ENCODE measurements at regions of chr19 and their contacts with region 1.

Region 1: DNA sequence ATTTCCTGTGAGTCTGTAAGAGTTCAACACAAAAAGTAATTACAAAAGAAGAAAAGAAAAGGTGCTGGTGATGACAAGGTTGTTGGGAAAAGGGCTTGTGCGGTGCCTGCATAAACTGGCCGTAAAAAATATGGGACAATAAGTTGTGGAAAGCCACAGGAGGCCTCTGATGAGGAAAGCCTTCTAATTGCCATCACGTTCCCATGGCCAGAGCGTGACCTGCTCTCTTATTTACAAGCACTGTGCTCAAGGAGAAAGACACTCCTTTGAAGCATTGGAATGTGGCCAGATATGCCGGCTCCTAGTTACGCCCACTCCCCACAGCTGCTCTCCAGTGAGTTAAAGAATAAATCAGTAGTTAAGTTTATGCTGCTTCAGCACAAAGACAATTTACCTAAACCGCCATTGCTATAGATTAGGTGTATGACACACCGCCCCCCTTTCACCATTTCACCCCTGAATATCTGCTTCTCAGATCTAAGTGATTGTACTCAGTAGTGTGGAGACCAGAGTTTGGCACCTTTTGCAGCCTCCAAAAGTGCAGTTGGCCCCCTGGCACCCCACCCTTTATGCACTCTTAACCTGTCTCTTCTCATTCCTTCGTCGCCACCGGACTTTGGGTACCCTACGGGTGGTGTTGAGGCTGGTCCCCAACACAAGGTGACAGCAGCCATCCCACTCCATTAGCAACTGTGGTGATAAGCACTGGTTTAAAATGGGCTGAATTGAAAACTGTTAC is 8.1 kb upstream of the PGLYRP1 start:
- DNase-seq: no peak
- H3K4me3 ChIP-seq: no peak overlapping the region
- H3K27ac ChIP-seq: no peak overlapping the region
- H3K4me1 ChIP-seq: no peaks in the 10 kb centered on the region
- H3K27me3 ChIP-seq: no peaks in the 10 kb centered on the region
- CTCF ChIP-seq: no peak
- EP300 ChIP-seq: no peak
- POLR2A ChIP-seq: no peak
- RAD21 ChIP-seq: no peak

Region 2: GRCh38 chr19:45955905-45956608 is 74.9 kb before region 1 on chr19:
- CTCF ChIA-PET with region 1: no interaction called
- POLR2A ChIA-PET with region 1: no interaction called
- DNase-seq: no peak
- H3K4me3 ChIP-seq: no peak overlapping the region
- H3K27ac ChIP-seq: no peak overlapping the region
- H3K4me1 ChIP-seq: peaks cover 0 to 7% (median 2%) of the 10 kb centered on the region in 4 experiments; a peak in 5 of 7 replicates
- H3K27me3 ChIP-seq: no peaks in the 10 kb centered on the region
- CTCF ChIP-seq: no peak
- EP300 ChIP-seq: no peak
- POLR2A ChIP-seq: no peak
- RAD21 ChIP-seq: no peak

Region 3: GRCh38 chr19:45994989-45995714 is 35.8 kb before region 1 on chr19 and contains the start of gene CCDC61:
- CTCF ChIA-PET with region 1: no interaction called
- POLR2A ChIA-PET with region 1: no interaction called
- DNase-seq: peak; percentile 96 to 97
- H3K4me3 ChIP-seq: peak within 1 kb of the TSS; percentile 83 to 100 (median 89)
- H3K27ac ChIP-seq: peak within 1 kb of the TSS; percentile 57; the same call in 1 of the 2 replicates
- H3K4me1 ChIP-seq: peaks cover 3 to 7% (median 4%) of the 10 kb centered on the region in 4 experiments; a peak in 6 of 7 replicates
- H3K27me3 ChIP-seq: no peaks in the 10 kb centered on the region
- CTCF ChIP-seq: no peak
- EP300 ChIP-seq: no peak
- POLR2A ChIP-seq: peak; percentile 41 to 50; a peak in 2 of 3 replicates
- RAD21 ChIP-seq: no peak
- total RNA-seq, gene CCDC61: 16.1 and 17.4 TPM in 2 replicates

Region 4: GRCh38 chr19:46009530-46010510 is 21.2 kb before region 1 on chr19:
- CTCF ChIA-PET with region 1: interaction called, 15 read pairs
- POLR2A ChIA-PET with region 1: interaction called, 4 read pairs
- DNase-seq: peak in 1 of 2 experiments; percentile 95
- H3K4me3 ChIP-seq: no peak overlapping the region
- H3K27ac ChIP-seq: no peak overlapping the region
- H3K4me1 ChIP-seq: peaks cover 0 to 6% (median 5%) of the 10 kb centered on the region in 4 experiments; a peak in 5 of 7 replicates
- H3K27me3 ChIP-seq: peaks cover 0 to 7% (median 6%) of the 10 kb centered on the region in 4 experiments; a peak in 4 of 7 replicates
- CTCF ChIP-seq: peak; percentile 75 to 84 (median 82)
- EP300 ChIP-seq: no peak
- POLR2A ChIP-seq: no peak
- RAD21 ChIP-seq: peak; percentile 61 to 72

Region 5: DNA sequence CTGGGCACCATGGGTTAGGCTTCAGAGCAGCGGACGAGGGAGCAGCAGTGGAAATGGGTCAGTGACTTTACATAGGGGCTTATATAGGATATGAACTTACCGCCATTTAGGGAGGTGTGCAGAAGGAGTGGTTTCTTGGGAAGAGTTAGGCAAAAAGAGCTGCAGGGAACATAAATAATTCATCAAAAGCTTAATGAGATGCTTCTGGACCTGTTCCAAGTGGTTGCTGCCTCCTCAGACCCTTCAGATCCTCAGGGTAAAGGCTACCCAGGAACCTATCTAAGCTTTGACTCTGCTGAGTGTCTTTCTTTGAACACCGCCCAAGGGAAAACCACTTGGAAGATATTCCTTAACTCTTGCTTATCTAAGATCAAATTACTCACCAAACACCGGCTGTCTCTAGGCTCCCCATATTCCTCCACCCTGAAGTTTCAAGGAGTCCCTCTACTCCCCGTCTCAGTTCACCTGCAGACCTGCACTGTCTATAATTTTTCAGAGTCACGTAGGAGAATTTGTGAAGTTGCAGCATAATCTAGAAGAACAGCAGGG is 10.0 kb after region 1 on chr19 and contains the start of gene IGFL4:
- CTCF ChIA-PET with region 1: interaction called, 34 read pairs
- POLR2A ChIA-PET with region 1: interaction called, 7 read pairs
- DNase-seq: no peak
- H3K4me3 ChIP-seq: no peak within 1 kb of the TSS
- H3K27ac ChIP-seq: no peak within 1 kb of the TSS
- H3K4me1 ChIP-seq: no peaks in the 10 kb centered on the region
- H3K27me3 ChIP-seq: peaks cover 0 to 2% (median 2%) of the 10 kb centered on the region in 4 experiments; a peak in 5 of 7 replicates
- CTCF ChIP-seq: no peak
- EP300 ChIP-seq: no peak
- POLR2A ChIP-seq: no peak
- RAD21 ChIP-seq: no peak
- total RNA-seq, gene IGFL4: 0.11 TPM in 1 of 2 replicates, not detected in the other

Region 6: GRCh38 chr19:46049597-46049996 is 18.6 kb after region 1 on chr19:
- CTCF ChIA-PET with region 1: interaction called, 46 read pairs
- POLR2A ChIA-PET with region 1: interaction called, 5 read pairs
- DNase-seq: peak; percentile 27 to 81
- H3K4me3 ChIP-seq: peak overlapping the region in 1 of 4 experiments; percentile 17; a peak in 1 of 8 replicates
- H3K27ac ChIP-seq: no peak overlapping the region
- H3K4me1 ChIP-seq: no peaks in the 10 kb centered on the region
- H3K27me3 ChIP-seq: no peaks in the 10 kb centered on the region; a peak in 2 of 7 replicates
- CTCF ChIP-seq: peak; percentile 77 to 89 (median 82)
- EP300 ChIP-seq: no peak
- POLR2A ChIP-seq: no peak
- RAD21 ChIP-seq: peak; percentile 27 to 57

Measured in H1 (cell line).